ENCODE measurements at regions of chr7 and their contacts with region 1.

Region 1: DNA sequence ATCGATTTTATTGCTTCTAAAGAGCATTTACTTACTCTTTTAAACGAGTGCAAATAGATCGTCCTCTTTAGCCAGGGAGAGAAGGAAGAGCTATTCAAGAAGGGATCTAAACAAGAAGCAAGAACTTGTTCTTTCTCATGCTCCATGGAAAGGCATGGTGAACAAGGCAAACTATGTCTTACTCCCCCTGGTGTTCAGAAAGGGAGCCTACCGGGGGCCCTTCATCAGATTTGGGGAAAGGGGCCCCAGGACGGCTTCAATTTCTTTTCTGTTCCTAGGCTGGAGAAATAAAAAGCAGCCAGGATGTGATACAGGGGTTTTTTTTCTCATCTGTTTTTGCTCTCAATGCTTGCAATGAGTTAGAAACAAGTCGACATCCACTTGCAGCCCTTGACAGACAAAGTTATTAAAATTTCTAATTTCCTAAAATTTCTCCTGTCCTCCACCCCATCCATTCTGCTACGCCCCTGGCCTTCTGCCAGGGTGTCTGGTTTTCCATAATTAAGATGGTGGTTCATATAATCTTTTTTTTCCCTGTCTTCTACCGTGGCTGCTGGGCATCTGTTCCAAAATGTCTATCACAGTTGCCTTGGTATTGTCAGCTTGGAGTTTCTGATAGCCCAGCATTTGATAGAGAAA is 214.4 kb downstream of the CREB5 start:
- DNase-seq: peak; percentile 47 to 62
- H3K4me3 ChIP-seq: no peak overlapping the region
- H3K4me3 Mint-ChIP-seq: no peak overlapping the region
- H3K27ac Mint-ChIP-seq: no peak overlapping the region
- H3K4me1 ChIP-seq: peaks cover 15% of the 10 kb centered on the region; the same call in 1 of the 2 replicates
- H3K4me1 Mint-ChIP-seq: peaks cover 14% of the 10 kb centered on the region
- H3K27me3 ChIP-seq: no peaks in the 10 kb centered on the region
- H3K27me3 Mint-ChIP-seq: no peaks in the 10 kb centered on the region
- CTCF ChIP-seq: peak; percentile 78 to 82

Region 2: GRCh38 chr7:28298870-28299518 is 327.7 kb before region 1 on chr7:
- CTCF ChIA-PET with region 1: no interaction called
- POLR2A ChIA-PET with region 1: no interaction called
- intact Hi-C with region 1: loop called (anchors 1 kb)
- DNase-seq: peak; percentile 56 to 70
- H3K4me3 ChIP-seq: no peak overlapping the region
- H3K4me3 Mint-ChIP-seq: no peak overlapping the region
- H3K27ac Mint-ChIP-seq: no peak overlapping the region
- H3K4me1 ChIP-seq: no peaks in the 10 kb centered on the region
- H3K4me1 Mint-ChIP-seq: no peaks in the 10 kb centered on the region
- H3K27me3 ChIP-seq: no peaks in the 10 kb centered on the region
- H3K27me3 Mint-ChIP-seq: peaks cover 3% of the 10 kb centered on the region
- CTCF ChIP-seq: peak; percentile 47 to 79

Region 3: GRCh38 chr7:28389504-28390395 is 237.0 kb before region 1 on chr7:
- CTCF ChIA-PET with region 1: interaction called, 3 read pairs
- POLR2A ChIA-PET with region 1: no interaction called
- intact Hi-C with region 1: loop called (anchors 1 kb)
- DNase-seq: peak in 1 of 2 experiments; percentile 50
- H3K4me3 ChIP-seq: no peak overlapping the region
- H3K4me3 Mint-ChIP-seq: peak overlapping the region; percentile 46
- H3K27ac Mint-ChIP-seq: no peak overlapping the region
- H3K4me1 ChIP-seq: no peaks in the 10 kb centered on the region; the same call in 1 of the 2 replicates
- H3K4me1 Mint-ChIP-seq: no peaks in the 10 kb centered on the region
- H3K27me3 ChIP-seq: no peaks in the 10 kb centered on the region
- H3K27me3 Mint-ChIP-seq: peaks cover 7% of the 10 kb centered on the region
- CTCF ChIP-seq: peak; percentile 67 to 78

Region 4: GRCh38 chr7:28408960-28409715 is 217.6 kb before region 1 on chr7:
- CTCF ChIA-PET with region 1: interaction called, 5 read pairs
- POLR2A ChIA-PET with region 1: no interaction called
- intact Hi-C with region 1: loop called (anchors 5 kb)
- DNase-seq: peak; percentile 92 to 93
- H3K4me3 ChIP-seq: peak overlapping the region; percentile 47
- H3K4me3 Mint-ChIP-seq: peak overlapping the region; percentile 85
- H3K27ac Mint-ChIP-seq: peak overlapping the region; percentile 89
- H3K4me1 ChIP-seq: peaks cover 5% of the 10 kb centered on the region
- H3K4me1 Mint-ChIP-seq: peaks cover 9% of the 10 kb centered on the region
- H3K27me3 ChIP-seq: no peaks in the 10 kb centered on the region; the same call in 1 of the 2 replicates
- H3K27me3 Mint-ChIP-seq: no peaks in the 10 kb centered on the region
- CTCF ChIP-seq: no peak

Region 5: GRCh38 chr7:28458732-28459131 is 168.0 kb before region 1 on chr7:
- CTCF ChIA-PET with region 1: no interaction called
- POLR2A ChIA-PET with region 1: no interaction called
- intact Hi-C with region 1: loop called (anchors 10 kb)
- DNase-seq: peak; percentile 28 to 47
- H3K4me3 ChIP-seq: no peak overlapping the region
- H3K4me3 Mint-ChIP-seq: no peak overlapping the region
- H3K27ac Mint-ChIP-seq: no peak overlapping the region
- H3K4me1 ChIP-seq: no peaks in the 10 kb centered on the region
- H3K4me1 Mint-ChIP-seq: peaks cover 11% of the 10 kb centered on the region
- H3K27me3 ChIP-seq: no peaks in the 10 kb centered on the region
- H3K27me3 Mint-ChIP-seq: no peaks in the 10 kb centered on the region
- CTCF ChIP-seq: no peak

Region 6: DNA sequence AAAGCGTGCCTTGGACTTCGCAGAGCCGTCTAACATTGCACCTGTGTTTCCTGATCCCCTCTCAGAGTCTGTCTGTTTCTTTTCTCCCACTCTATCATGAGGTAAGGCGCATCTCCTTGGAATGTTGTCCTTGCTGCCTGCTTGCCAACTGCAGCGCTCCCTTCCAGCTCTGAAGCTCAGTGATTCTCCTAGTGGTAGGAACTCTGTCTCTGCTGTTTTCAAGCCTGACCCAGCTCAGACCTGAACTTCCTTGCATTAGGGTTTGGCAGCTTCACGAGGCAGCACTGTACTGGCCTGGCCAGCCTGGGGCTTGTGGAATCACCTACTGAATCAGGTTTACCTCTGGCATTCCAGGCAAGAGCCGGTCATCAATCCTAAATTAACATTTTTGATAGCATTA is 90.5 kb before region 1 on chr7:
- CTCF ChIA-PET with region 1: interaction called, 5 read pairs
- POLR2A ChIA-PET with region 1: no interaction called
- intact Hi-C with region 1: loop called (anchors 1 kb)
- DNase-seq: peak; percentile 66
- H3K4me3 ChIP-seq: no peak overlapping the region
- H3K4me3 Mint-ChIP-seq: no peak overlapping the region
- H3K27ac Mint-ChIP-seq: no peak overlapping the region
- H3K4me1 ChIP-seq: 0 out of 2 replicates have a peak, but pooled peaks cover 9% of the 10 kb centered on the region
- H3K4me1 Mint-ChIP-seq: peaks cover 9% of the 10 kb centered on the region
- H3K27me3 ChIP-seq: no peaks in the 10 kb centered on the region
- H3K27me3 Mint-ChIP-seq: no peaks in the 10 kb centered on the region
- CTCF ChIP-seq: peak; percentile 62 to 78

Region 7: DNA sequence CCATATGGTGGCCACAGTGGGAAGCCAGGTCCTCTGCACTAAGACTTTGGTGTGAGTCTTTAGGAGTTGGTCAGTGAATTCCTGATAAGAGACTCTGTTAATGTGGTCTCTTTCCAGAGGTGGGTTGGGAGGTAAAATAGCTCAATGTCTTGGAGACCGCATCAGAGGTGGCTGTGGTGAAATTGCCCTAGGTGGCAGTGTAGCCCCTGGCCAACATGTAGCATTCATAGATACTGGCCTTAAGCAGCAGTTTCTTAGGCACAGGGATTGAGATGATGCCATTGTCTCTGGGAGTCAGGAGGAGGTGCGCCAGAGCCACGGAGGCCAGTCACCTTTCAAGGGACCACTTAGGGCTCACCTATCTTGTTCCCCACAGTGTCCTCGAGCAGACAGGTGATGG is 11.7 kb before region 1 on chr7:
- CTCF ChIA-PET with region 1: no interaction called
- POLR2A ChIA-PET with region 1: no interaction called
- intact Hi-C with region 1: no loop called
- DNase-seq: no peak
- H3K4me3 ChIP-seq: no peak overlapping the region
- H3K4me3 Mint-ChIP-seq: no peak overlapping the region
- H3K27ac Mint-ChIP-seq: no peak overlapping the region
- H3K4me1 ChIP-seq: peaks cover 22% of the 10 kb centered on the region
- H3K4me1 Mint-ChIP-seq: peaks cover 17% of the 10 kb centered on the region
- H3K27me3 ChIP-seq: no peaks in the 10 kb centered on the region
- H3K27me3 Mint-ChIP-seq: no peaks in the 10 kb centered on the region
- CTCF ChIP-seq: peak in 1 of 2 experiments; percentile 13

Region 8: DNA sequence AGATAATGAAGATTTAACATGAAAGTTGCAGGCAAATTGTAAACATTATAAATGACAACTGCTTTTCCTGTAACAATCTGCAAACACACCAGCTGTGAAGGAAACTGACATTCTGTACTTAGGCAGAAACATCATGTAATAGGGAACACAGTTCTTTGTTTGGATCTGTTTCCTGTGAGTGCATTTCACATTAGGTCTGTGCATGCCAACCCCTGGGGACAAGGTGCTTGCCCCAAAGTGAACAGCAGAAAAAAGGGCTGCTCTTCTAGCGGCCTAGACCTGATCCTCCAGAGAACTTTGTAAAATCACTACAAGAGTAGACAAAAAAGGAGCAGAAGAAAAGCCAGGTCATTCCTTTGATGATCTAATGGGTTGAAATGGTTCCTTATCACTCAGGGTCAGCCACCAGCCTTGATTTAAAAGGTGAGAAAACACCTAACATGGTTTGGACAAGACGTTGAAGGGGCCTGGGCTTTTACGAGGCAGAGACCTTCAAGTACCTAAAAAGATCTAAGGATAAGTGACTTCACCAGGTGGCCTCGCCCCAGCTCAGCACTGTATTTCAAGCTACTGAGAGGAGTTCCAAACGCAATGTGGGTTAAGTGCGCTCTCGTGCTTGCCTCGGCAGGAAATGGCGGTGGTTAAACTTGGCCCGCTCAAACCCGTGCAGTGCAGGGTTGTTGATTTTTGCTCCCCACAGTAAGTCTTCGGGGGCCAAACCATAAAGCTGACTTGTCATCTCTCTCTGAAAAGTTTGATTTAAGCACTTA is 35.3 kb after region 1 on chr7:
- CTCF ChIA-PET with region 1: no interaction called
- POLR2A ChIA-PET with region 1: no interaction called
- intact Hi-C with region 1: no loop called
- DNase-seq: no peak
- H3K4me3 ChIP-seq: no peak overlapping the region
- H3K4me3 Mint-ChIP-seq: no peak overlapping the region
- H3K27ac Mint-ChIP-seq: no peak overlapping the region
- H3K4me1 ChIP-seq: no peaks in the 10 kb centered on the region
- H3K4me1 Mint-ChIP-seq: no peaks in the 10 kb centered on the region
- H3K27me3 ChIP-seq: no peaks in the 10 kb centered on the region
- H3K27me3 Mint-ChIP-seq: no peaks in the 10 kb centered on the region
- CTCF ChIP-seq: no peak